Activated CD4-positive, alpha-beta T cell treated with anti-CD3 and anti-CD28 coated beads, Interleukin-2, amount 10 ng/mL, durations not matched to agents 7 days and 5 days (primary cell): ENCODE measurements at regions of chrX and their contacts with region 1.

Region 1: GRCh38 chrX:70096052-70096451 is 33.8 kb downstream of the OTUD6A start:
- DNase-seq: no peak
- H3K4me3 Mint-ChIP-seq: no peak overlapping the region
- H3K27ac Mint-ChIP-seq: no peak overlapping the region
- H3K4me1 Mint-ChIP-seq: no peaks in the 10 kb centered on the region
- H3K27me3 Mint-ChIP-seq: no peaks in the 10 kb centered on the region

Region 2: GRCh38 chrX:69538321-69538876 is 557.7 kb before region 1 on chrX:
- CTCF ChIA-PET with region 1: interaction called, 12 read pairs
- POLR2A ChIA-PET with region 1: no interaction called
- DNase-seq: peak; percentile 66
- H3K4me3 Mint-ChIP-seq: peak overlapping the region; percentile 30
- H3K27ac Mint-ChIP-seq: no peak overlapping the region
- H3K4me1 Mint-ChIP-seq: peaks cover 10% of the 10 kb centered on the region
- H3K27me3 Mint-ChIP-seq: peaks cover 5% of the 10 kb centered on the region

Region 3: DNA sequence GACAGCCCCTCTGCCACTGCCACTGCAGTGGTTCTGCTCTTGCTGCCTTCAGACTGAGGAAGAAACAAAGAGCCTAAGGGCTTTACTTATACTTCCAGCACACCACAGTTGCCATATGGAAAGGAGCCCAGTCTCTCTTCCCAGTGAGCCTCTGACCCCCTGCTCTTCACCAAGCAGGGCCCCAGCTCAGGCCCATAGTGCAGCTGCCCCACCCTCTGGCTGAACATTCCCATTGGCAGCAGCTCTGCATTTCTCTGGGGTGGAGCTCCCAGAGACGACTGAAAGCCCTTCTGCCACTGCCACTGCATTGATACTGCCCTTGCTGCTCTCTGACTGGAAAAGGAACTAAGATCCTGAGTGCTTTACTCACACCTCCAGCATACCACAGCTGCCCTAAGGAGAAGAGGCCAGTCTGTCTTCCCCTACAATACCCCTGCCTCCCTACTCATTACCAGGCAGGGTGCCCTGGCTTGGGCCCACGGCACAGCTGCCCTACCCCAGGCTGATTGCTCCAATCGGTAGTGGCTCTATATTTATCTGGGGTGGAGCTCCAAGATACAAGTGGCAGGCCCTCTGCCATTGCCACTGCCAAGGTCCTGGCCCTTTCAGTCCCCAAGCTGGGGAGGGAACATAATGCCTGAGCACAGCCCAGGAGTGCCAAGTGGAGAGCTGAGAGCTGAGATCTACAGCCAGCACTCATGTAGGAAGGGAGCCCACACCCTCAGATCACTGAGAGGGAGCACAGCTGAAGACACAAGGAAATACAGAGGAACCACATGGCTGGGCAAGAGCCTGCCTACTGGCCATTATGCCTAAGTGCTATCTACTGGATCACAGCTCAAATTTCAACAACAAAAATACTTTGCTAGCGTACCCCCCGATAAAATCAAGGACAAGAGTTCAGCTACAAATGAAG is 82.3 kb before region 1 on chrX:
- CTCF ChIA-PET with region 1: no interaction called
- POLR2A ChIA-PET with region 1: no interaction called
- DNase-seq: no peak
- H3K4me3 Mint-ChIP-seq: no peak overlapping the region
- H3K27ac Mint-ChIP-seq: no peak overlapping the region
- H3K4me1 Mint-ChIP-seq: peaks cover 23% of the 10 kb centered on the region
- H3K27me3 Mint-ChIP-seq: peaks cover 4% of the 10 kb centered on the region

Region 4: GRCh38 chrX:70196961-70197805 is 101.1 kb after region 1 on chrX:
- CTCF ChIA-PET with region 1: no interaction called
- POLR2A ChIA-PET with region 1: no interaction called
- DNase-seq: peak; percentile 67
- H3K4me3 Mint-ChIP-seq: no peak overlapping the region
- H3K27ac Mint-ChIP-seq: no peak overlapping the region
- H3K4me1 Mint-ChIP-seq: peaks cover 4% of the 10 kb centered on the region
- H3K27me3 Mint-ChIP-seq: peaks cover 10% of the 10 kb centered on the region

Region 5: DNA sequence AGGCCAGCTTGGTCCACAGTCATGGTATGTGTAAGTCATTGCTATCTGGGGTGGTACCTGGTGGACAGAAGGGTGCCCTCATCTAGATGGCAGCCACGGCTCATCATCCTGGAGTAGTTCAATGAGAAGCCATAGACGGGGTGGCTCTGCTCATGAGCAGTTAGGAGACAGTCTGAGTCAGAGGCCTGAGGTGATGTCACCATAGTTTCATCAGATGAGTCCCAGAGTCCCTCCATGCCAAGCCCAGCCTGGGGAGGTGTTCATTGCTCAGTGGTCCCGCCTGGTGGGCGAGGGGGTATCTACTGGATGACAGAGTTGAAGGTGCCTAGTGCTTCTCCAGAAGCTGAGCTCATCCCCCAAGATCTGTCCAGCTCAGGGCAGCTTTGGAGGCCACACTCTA is 398.4 kb after region 1 on chrX:
- CTCF ChIA-PET with region 1: no interaction called
- POLR2A ChIA-PET with region 1: no interaction called
- DNase-seq: no peak
- H3K4me3 Mint-ChIP-seq: no peak overlapping the region
- H3K27ac Mint-ChIP-seq: no peak overlapping the region
- H3K4me1 Mint-ChIP-seq: peaks cover 16% of the 10 kb centered on the region
- H3K27me3 Mint-ChIP-seq: no peaks in the 10 kb centered on the region